ENCODE measurements at regions of chr1 and their contacts with region 1.

Region 1: DNA sequence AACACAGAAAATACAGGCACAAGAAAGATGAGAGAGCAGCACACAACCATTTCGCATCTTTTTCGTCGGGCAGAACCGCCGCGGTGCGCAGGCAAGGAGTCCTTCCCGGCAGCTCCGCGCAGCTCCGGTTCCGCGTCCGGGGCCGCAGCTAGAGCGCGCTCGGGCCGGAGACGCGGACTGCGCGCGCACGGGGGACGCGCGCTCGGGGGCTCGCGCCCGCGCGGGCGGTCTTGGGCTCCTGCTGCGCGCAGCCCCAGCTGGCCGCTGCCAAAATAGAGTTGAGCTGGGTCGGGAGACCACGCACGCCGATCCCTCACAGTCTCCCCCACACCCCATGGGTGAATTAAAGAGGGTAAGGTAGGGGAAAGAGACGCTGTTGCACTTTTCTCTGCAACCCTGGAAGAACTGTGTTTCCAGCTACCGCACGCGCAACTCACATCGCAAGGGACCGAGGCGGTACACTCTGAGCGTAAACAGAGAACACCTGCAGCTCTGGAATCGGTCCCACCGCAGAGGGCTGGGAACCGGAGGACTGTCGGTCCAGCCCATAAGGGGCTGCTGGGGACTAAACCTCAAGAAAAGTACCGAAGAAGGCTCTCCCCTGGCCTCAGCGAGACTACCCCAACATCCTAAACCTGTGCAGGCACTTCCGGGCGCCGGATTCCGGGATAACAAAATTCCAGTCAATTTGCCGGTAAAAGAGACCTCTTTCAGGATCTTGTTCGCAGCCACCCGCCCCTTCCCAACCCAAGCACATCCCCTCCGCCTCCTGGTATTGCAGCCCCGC is 1.7 kb downstream of the NR5A2 start:
- DNase-seq: peak; percentile 94
- ATAC-seq: peak; percentile 90
- H3K4me3 ChIP-seq: peak overlapping the region; percentile 65
- H3K27ac ChIP-seq: no peak overlapping the region
- H3K4me1 ChIP-seq: peaks cover 12% of the 10 kb centered on the region
- H3K27me3 ChIP-seq: peaks cover 51% of the 10 kb centered on the region
- CTCF ChIP-seq: no peak

Region 2: GRCh38 chr1:199878823-199879222 is 150.4 kb before region 1 on chr1:
- CTCF ChIA-PET with region 1: no interaction called
- POLR2A ChIA-PET with region 1: no interaction called
- intact Hi-C with region 1: loop called (anchors 10 kb)
- DNase-seq: no peak
- ATAC-seq: no peak
- H3K4me3 ChIP-seq: no peak overlapping the region
- H3K27ac ChIP-seq: no peak overlapping the region
- H3K4me1 ChIP-seq: no peaks in the 10 kb centered on the region
- H3K27me3 ChIP-seq: peaks cover 11% of the 10 kb centered on the region
- CTCF ChIP-seq: no peak

Region 3: DNA sequence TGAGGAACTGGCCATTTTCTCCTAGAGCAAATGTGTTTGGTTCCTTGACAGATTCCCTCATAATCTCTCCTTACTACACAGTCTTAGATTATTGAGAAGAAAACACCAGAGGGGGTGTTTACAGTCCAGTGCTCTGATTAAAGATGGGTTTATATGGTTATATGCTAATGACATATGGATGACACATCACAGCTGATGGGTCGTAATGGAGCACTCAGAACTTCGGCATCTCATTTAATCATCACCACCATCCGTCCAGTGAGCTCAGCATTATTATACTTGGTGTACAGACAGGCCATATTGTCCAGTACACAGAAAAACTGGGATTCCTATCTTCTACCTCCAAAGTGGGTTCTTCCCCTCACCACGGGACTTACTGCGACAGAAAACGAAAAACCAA is 24.1 kb before region 1 on chr1:
- CTCF ChIA-PET with region 1: no interaction called
- POLR2A ChIA-PET with region 1: no interaction called
- intact Hi-C with region 1: no loop called
- DNase-seq: peak; percentile 52
- ATAC-seq: peak; percentile 58
- H3K4me3 ChIP-seq: no peak overlapping the region
- H3K27ac ChIP-seq: no peak overlapping the region
- H3K4me1 ChIP-seq: no peaks in the 10 kb centered on the region
- H3K27me3 ChIP-seq: peaks cover 16% of the 10 kb centered on the region; the same call in 1 of the 2 replicates
- CTCF ChIP-seq: no peak

Region 4: GRCh38 chr1:200048218-200048617 is 19.0 kb after region 1 on chr1:
- CTCF ChIA-PET with region 1: no interaction called
- POLR2A ChIA-PET with region 1: no interaction called
- intact Hi-C with region 1: loop called (anchors 2 kb)
- DNase-seq: no peak
- ATAC-seq: no peak
- H3K4me3 ChIP-seq: no peak overlapping the region
- H3K27ac ChIP-seq: no peak overlapping the region
- H3K4me1 ChIP-seq: no peaks in the 10 kb centered on the region
- H3K27me3 ChIP-seq: peaks cover 30% of the 10 kb centered on the region
- CTCF ChIP-seq: no peak

Region 5: GRCh38 chr1:200131616-200132015 is 102.4 kb after region 1 on chr1:
- CTCF ChIA-PET with region 1: no interaction called
- POLR2A ChIA-PET with region 1: no interaction called
- intact Hi-C with region 1: loop called (anchors 5 kb)
- DNase-seq: peak; percentile 43
- ATAC-seq: no peak
- H3K4me3 ChIP-seq: no peak overlapping the region
- H3K27ac ChIP-seq: no peak overlapping the region
- H3K4me1 ChIP-seq: peaks cover 29% of the 10 kb centered on the region
- H3K27me3 ChIP-seq: no peaks in the 10 kb centered on the region
- CTCF ChIP-seq: peak; percentile 38; the same call in 1 of the 2 replicates